Left ventricle myocardium inferior (tissue), 1 donor: ENCODE measurements at regions of chr2 and their contacts with region 1.

Region 1: DNA sequence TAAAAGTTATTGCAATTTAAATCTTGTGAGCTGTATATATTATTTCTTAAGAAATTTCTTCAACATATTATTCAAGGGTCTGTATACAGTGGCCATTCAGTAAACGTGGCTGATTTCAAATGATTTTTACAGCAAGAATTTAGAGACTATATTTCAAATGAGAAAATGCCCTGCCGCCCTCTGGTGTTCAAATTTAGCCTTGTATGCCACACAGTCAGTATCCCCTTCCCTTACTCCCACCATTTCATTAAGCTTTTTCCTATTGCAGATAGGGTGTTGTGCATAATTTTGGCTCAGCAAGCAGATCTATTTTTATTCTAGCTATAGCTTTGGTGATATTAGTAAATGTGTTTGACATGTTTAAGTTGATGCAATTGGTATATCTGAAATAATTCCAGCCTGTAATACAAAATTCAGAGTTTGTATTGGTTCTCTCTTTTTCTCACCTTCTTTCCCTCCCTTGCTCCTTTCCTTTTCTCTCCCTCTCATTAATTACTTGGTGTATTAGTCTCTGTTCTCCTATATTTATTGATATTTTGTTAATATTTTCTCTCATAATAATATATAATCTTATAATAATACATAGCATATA is 22.8 kb upstream of the SCN7A start:
- DNase-seq: no peak
- H3K4me3 ChIP-seq: no peak overlapping the region
- H3K27ac ChIP-seq: no peak overlapping the region
- H3K4me1 ChIP-seq: peaks cover 16% of the 10 kb centered on the region
- H3K27me3 ChIP-seq: no peaks in the 10 kb centered on the region
- CTCF ChIP-seq: peak; percentile 75

Region 2: GRCh38 chr2:166424841-166425240 is 92.0 kb before region 1 on chr2:
- intact Hi-C with region 1: loop called (anchors 10 kb)
- DNase-seq: no peak
- H3K4me3 ChIP-seq: no peak overlapping the region
- H3K27ac ChIP-seq: no peak overlapping the region
- H3K4me1 ChIP-seq: no peaks in the 10 kb centered on the region
- H3K27me3 ChIP-seq: no peaks in the 10 kb centered on the region
- CTCF ChIP-seq: no peak